ENCODE measurements at regions of chr4 and their contacts with region 1.

Region 1: DNA sequence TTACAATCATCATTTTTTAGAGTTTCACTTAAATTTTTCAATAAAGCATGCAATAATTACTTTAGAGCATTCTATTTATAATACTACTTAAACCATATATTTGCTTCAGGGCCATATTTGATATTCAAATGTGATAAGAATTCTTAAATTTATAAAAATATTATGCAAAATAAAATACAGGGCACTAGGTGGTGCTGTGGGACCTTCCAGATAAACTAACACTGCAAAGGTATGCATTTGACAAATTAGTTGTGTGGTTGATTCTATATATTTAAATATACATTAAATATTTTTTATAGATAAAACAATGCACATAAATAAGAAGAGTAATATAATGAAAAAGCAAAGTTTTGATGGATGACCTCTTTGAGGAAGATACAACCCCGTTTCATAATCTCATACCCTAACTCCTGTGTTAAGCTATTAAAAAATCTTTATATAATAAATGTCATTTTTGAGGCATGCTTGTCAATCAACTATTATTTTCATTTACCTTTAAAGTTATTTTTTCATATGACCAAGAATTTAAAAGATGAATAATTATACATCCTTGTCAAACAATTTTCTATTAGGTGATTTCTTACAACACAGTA is 128.4 kb downstream of the REELD1 start:
- DNase-seq: no peak
- ATAC-seq: no peak
- H3K4me3 ChIP-seq: no peak overlapping the region
- H3K27ac ChIP-seq: no peak overlapping the region
- H3K4me1 ChIP-seq: no peaks in the 10 kb centered on the region
- H3K27me3 ChIP-seq: no peaks in the 10 kb centered on the region

Region 2: GRCh38 chr4:146638801-146639605 is 296.3 kb after region 1 on chr4 and contains the start of gene POU4F2:
- intact Hi-C with region 1: loop called in 1 of 2 experiments (anchors 10 kb)
- DNase-seq: no peak
- ATAC-seq: no peak
- H3K4me3 ChIP-seq: no peak within 1 kb of the TSS
- H3K27ac ChIP-seq: no peak within 1 kb of the TSS
- H3K4me1 ChIP-seq: no peaks in the 10 kb centered on the region
- H3K27me3 ChIP-seq: peaks cover 0 to 2% of the 10 kb centered on the region in 2 donors
- total RNA-seq, gene POU4F2: not detected

Region 3: GRCh38 chr4:146916479-146917076 is 573.9 kb after region 1 on chr4:
- intact Hi-C with region 1: loop called (anchors 5 kb)
- DNase-seq: no peak
- ATAC-seq: no peak
- H3K4me3 ChIP-seq: no peak overlapping the region
- H3K27ac ChIP-seq: no peak overlapping the region
- H3K4me1 ChIP-seq: no peaks in the 10 kb centered on the region
- H3K27me3 ChIP-seq: no peaks in the 10 kb centered on the region

Measured in aorta (tissue), 5 donors.